Activated naive CD4-positive, alpha-beta T cell treated with anti-CD3 and anti-CD28 coated beads for 36 hours (primary cell): ENCODE measurements at regions of chr1 and their contacts with region 1.

Region 1: DNA sequence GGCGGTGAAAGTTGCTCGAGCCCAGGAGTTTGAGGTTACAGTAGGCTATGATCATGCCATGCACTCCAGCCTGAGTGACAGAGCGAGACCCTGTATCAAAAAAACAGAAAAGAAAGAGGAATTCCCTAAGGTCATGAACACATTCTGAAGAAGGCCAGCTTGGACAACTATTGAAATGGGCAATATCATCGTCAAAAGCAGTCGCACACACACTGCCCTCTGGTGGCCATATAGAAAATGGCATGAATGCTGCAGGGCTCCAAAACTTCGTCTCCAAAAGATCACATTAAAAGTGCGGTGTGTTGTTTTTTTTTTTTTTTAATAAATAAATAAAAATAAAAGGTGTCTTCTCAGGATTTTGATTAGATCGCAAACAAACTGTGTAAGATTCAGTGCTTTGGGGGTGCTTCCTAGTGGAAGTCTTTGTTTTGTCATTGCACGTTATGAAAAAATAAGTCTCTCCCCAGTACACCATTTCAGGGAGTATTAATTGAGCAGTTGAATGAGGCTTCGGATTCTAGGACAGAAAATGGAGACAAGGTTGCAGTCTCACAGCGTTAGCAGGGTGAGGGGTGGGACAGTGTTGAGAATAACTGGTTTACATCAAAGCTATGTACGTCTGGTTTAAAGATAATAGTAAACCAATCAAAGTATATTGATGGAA is 87.5 kb upstream of the FMN2 start:
- DNase-seq: peak; percentile 15
- H3K4me3 Mint-ChIP-seq: no peak overlapping the region
- H3K27ac Mint-ChIP-seq: no peak overlapping the region
- H3K4me1 Mint-ChIP-seq: no peaks in the 10 kb centered on the region
- H3K27me3 Mint-ChIP-seq: peaks cover 20% of the 10 kb centered on the region

Region 2: GRCh38 chr1:239951511-239952140 is 52.6 kb before region 1 on chr1:
- CTCF ChIA-PET with region 1: interaction called, 8 read pairs
- intact Hi-C with region 1: loop called (anchors 10 kb)
- DNase-seq: peak; percentile 74
- H3K4me3 Mint-ChIP-seq: no peak overlapping the region
- H3K27ac Mint-ChIP-seq: no peak overlapping the region
- H3K4me1 Mint-ChIP-seq: no peaks in the 10 kb centered on the region
- H3K27me3 Mint-ChIP-seq: no peaks in the 10 kb centered on the region

Region 3: DNA sequence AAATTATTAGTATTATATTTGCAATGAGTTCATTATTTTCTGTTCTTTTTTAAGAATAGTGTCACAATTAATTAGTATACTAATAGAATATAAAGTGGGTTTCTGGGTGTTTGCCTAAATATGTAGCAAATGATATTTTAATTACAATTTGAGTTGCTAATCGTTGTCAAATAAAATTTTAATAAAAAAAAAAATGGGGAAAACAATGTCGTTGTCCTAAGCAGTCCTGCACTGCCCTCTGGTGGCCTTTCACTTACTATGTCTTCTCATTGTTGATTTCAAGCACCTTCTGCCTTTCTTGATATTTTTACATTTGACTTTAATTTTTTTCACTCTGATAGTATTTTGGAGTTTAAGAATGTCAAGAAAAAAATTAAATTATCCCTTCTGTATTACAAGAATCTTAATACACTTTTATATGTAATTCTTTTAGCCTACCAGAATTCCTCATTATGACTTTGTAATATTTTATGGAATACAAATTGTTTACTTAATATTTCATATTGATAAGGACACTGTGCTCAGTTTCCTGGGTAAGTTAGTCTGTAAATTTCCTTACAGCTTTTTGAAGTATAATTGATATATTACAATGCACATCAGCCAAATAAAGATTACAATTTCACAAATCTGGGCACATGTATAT is 17.0 kb before region 1 on chr1:
- CTCF ChIA-PET with region 1: interaction called, 12 read pairs
- intact Hi-C with region 1: no loop called
- DNase-seq: peak; percentile 58
- H3K4me3 Mint-ChIP-seq: no peak overlapping the region
- H3K27ac Mint-ChIP-seq: no peak overlapping the region
- H3K4me1 Mint-ChIP-seq: no peaks in the 10 kb centered on the region
- H3K27me3 Mint-ChIP-seq: peaks cover 5% of the 10 kb centered on the region

Region 4: GRCh38 chr1:240314845-240315801 is 310.9 kb after region 1 on chr1:
- CTCF ChIA-PET with region 1: no interaction called
- intact Hi-C with region 1: no loop called
- DNase-seq: no peak
- H3K4me3 Mint-ChIP-seq: no peak overlapping the region
- H3K27ac Mint-ChIP-seq: no peak overlapping the region
- H3K4me1 Mint-ChIP-seq: no peaks in the 10 kb centered on the region
- H3K27me3 Mint-ChIP-seq: no peaks in the 10 kb centered on the region